Activated B cell treated with CpG ODN at 0.5 μM for 24 hours (primary cell): ENCODE measurements at regions of chr12 and their contacts with region 1.

Region 1: DNA sequence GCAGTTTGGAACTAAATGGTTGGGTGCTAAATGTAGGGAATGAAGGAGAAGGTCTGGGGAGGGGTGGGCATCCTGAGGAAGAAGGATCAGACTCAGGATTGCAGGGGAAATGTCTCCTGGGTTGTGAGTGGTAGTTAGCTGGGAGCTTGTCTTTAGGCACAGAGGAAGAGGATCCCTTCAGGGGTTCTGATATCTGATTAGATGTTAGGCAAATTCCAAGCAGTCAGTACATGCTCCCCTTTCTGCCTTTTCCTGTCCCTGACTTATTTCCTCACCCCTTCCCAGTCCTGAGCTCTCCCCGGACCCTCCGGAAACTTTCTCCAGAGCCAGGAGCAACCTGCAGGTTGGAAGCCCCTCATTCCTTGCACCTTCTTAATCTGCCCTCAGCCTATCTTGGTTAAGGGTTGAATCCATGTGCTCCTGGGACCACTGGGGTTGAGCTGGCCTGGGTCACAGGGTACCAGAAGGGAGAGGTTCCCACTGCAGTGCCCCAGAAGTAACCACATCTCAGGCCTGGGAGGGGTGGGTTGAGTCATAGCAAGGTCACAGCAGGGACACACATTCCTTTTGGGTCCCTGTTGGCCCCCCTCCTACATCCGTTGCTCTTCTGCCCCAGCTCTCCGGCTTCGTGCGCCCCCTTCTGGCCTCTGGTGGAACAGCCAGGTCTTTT is 1.6 kb downstream of the IGFBP6 start:
- DNase-seq: peak; percentile 75
- ATAC-seq: peak; percentile 66
- H3K4me3 Mint-ChIP-seq: peak overlapping the region; percentile 13
- H3K27ac Mint-ChIP-seq: no peak overlapping the region
- H3K4me1 Mint-ChIP-seq: peaks cover 34% of the 10 kb centered on the region
- H3K27me3 Mint-ChIP-seq: peaks cover 13% of the 10 kb centered on the region
- CTCF ChIP-seq: peak; percentile 99

Region 2: DNA sequence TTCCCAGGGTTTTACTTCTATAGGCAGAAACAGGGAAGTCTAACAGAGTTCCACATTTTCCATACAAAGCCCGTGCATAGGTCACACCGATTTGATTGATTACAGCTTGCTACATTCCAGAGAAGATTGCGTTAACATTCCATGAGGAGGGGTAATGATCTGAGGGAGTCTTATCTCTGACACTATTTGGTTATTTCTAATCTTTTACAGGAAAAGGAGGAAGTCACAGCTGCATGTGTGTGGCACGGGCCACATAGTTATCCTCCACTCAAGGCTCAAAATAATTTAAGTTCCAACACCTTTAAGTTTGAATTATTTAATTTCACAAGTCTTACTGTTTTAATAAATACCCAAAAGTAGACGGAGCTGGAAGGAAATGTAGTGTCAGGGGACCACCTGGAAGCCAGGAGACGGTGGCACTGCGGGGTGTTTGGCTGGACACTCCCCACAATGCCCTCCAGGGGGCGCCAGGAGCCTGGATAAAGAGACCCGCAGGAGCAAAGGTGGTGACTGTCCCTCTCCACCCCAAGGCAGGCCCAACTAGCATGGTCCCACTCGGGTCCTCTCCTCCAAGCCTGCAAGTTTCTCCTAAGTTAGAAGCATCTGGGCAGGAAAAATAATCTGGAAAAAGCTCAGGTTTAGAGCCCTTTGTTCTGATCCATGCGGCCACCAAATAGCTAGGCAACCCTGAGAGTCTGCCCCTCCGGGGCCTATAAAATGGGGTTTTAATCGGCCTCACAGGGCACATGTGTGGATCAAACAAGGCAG is 214.4 kb before region 1 on chr12:
- CTCF ChIA-PET with region 1: no interaction called
- POLR2A ChIA-PET with region 1: no interaction called
- intact Hi-C with region 1: loop called (anchors 2 kb)
- DNase-seq: peak; percentile 66
- ATAC-seq: peak; percentile 83
- H3K4me3 Mint-ChIP-seq: no peak overlapping the region
- H3K27ac Mint-ChIP-seq: no peak overlapping the region
- H3K4me1 Mint-ChIP-seq: peaks cover 5% of the 10 kb centered on the region
- H3K27me3 Mint-ChIP-seq: peaks cover 31% of the 10 kb centered on the region
- CTCF ChIP-seq: peak; percentile 69

Region 3: GRCh38 chr12:53039851-53040250 is 59.3 kb before region 1 on chr12:
- CTCF ChIA-PET with region 1: interaction called, 5 read pairs
- POLR2A ChIA-PET with region 1: no interaction called
- intact Hi-C with region 1: loop called (anchors 2 kb)
- DNase-seq: no peak
- ATAC-seq: no peak
- H3K4me3 Mint-ChIP-seq: no peak overlapping the region
- H3K27ac Mint-ChIP-seq: no peak overlapping the region
- H3K4me1 Mint-ChIP-seq: peaks cover 3% of the 10 kb centered on the region
- H3K27me3 Mint-ChIP-seq: no peaks in the 10 kb centered on the region
- CTCF ChIP-seq: no peak

Region 4: GRCh38 chr12:53054112-53054833 is 44.8 kb before region 1 on chr12:
- CTCF ChIA-PET with region 1: no interaction called
- POLR2A ChIA-PET with region 1: interaction called, 3 read pairs
- intact Hi-C with region 1: loop called (anchors 5 kb)
- DNase-seq: peak; percentile 86
- ATAC-seq: peak; percentile 97
- H3K4me3 Mint-ChIP-seq: peak overlapping the region; percentile 95
- H3K27ac Mint-ChIP-seq: peak overlapping the region; percentile 90
- H3K4me1 Mint-ChIP-seq: peaks cover 12% of the 10 kb centered on the region
- H3K27me3 Mint-ChIP-seq: peaks cover 6% of the 10 kb centered on the region
- CTCF ChIP-seq: no peak

Region 5: GRCh38 chr12:53079226-53080117 is 19.6 kb before region 1 on chr12 and contains the start of gene SPRYD3:
- CTCF ChIA-PET with region 1: interaction called, 11 read pairs
- POLR2A ChIA-PET with region 1: interaction called, 12 read pairs
- intact Hi-C with region 1: loop called (anchors 1 kb)
- DNase-seq: peak; percentile 98
- ATAC-seq: peak; percentile 98
- H3K4me3 Mint-ChIP-seq: peak within 1 kb of the TSS; percentile 92
- H3K27ac Mint-ChIP-seq: peak within 1 kb of the TSS; percentile 87
- H3K4me1 Mint-ChIP-seq: peaks cover 31% of the 10 kb centered on the region
- H3K27me3 Mint-ChIP-seq: no peaks in the 10 kb centered on the region
- CTCF ChIP-seq: no peak
- total RNA-seq, gene SPRYD3: 32.5 and 33.9 TPM in 2 replicates